Cardiac septum (tissue), 1 donor: ENCODE measurements at regions of chr2 and their contacts with region 1.

Region 1: DNA sequence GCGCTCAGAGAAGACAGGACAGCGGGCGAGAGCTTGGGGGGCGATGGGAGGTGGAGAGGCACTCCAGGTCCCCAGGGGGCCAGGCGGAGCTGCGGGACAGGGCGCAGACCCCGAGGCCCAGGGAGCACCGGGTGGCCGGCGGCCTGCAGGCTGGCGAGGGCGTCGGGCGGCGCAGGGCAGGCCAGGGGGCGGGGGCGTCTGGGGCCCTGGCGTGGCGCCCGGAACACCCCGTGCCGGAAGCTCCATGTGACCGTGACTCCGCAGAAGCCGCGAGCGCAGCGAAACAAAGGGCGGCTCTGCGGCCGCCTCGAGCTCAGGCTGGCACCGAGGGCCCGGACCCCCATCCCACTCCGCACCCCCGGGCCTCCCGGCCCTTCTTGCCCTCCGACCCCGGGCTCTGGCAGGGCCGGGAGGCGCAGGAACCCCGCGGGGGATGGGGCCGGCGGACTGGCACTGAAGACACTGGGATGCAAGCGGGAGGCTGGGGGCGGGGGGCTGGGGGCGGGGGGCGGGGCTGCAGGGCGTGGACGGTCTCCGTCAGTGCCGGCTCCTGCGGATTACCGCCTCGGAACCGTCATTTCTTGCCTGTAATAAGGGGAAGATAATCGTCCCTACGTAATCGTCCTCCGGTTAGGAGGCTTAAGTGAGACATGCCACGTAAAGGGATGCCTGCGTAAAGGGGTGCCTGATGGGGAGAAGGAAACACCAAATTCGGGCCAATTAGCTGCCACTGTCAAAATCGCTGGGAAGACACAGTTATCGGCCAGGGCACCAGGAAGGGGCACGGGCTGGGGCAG is 19.2 kb downstream of the SH2D6 start:
- DNase-seq: peak; percentile 94

Region 2: GRCh38 chr2:85396531-85397470 is 40.9 kb before region 1 on chr2:
- intact Hi-C with region 1: no loop called
- DNase-seq: no peak

Region 3: GRCh38 chr2:85468704-85469349 is 31.1 kb after region 1 on chr2:
- intact Hi-C with region 1: no loop called
- DNase-seq: no peak

Region 4: DNA sequence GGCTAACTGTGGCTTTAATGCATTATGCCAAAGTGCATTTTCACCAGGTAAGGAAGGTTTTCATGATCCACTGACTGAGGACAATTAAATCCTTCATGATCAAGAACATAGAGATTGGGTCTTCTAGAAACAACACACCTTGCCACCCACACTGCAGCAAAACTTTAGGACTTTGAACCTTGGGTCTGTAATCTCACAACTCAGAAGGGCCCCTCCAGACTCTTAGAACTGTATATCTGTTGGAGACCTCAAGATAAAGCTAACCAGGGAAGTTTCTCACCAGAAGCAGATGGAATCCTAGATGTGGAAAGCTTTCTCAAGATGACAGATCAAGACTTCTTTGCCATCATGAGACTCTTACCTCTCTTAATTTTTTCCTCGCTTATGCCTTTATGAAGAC is 58.8 kb after region 1 on chr2:
- intact Hi-C with region 1: loop called (anchors 2 kb)
- DNase-seq: no peak